ENCODE measurements at regions of chr7 and their contacts with region 1.

Region 1: DNA sequence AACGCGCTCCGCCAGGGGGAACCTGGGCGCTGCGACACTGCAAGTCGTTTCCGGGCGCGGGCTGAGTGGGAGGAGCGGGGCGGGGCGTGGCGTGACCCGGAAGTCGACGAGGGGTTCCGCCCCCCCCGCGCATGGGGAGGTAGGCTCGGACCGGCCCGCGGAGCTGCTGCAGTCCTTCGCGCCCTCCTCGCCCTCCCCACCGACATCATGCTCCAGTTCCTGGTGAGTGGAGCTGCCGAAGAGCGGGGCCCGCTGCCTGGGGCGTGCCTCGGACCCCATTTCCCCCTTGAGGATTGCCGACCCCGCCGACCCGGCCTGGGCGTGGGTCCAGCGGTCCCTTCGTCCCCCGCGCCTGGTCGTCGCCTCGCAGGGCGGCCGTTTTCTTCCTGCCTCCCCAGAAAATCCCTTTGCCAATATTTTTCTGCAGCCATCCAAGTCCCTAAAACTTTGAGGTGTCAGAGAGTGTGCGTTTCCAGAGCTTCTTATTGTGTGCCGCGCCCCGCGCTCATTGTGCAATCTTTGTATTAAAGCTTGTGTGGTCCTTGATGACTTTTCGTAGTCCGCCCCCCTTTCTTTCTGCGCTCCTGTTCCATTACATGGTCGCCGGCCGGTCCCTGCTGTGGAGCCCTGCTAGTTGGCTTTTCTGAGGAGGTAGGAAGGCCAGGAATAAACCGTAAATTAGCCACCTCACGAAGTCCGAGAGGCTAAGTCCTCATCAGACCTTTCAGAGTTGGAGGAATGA is at the start of gene STMP1:
- DNase-seq: peak; percentile 91 to 99 (median 96)
- ATAC-seq: peak; percentile 99
- H3K4me3 ChIP-seq: peak within 1 kb of the TSS; percentile 72 to 76
- H3K4me3 Mint-ChIP-seq: peak within 1 kb of the TSS; percentile 90
- H3K27ac ChIP-seq: peak within 1 kb of the TSS; percentile 53 to 65
- H3K27ac Mint-ChIP-seq: peak within 1 kb of the TSS; percentile 88
- H3K4me1 ChIP-seq: peaks cover 20% of the 10 kb centered on the region
- H3K4me1 Mint-ChIP-seq: peaks cover 41% of the 10 kb centered on the region
- H3K27me3 ChIP-seq: no peaks in the 10 kb centered on the region
- H3K27me3 Mint-ChIP-seq: no peaks in the 10 kb centered on the region
- CTCF ChIP-seq: peak; percentile 64
- total RNA-seq, gene STMP1: 9.4 to 11.5 TPM

Region 2: GRCh38 chr7:135558337-135558767 is 104.2 kb before region 1 on chr7:
- CTCF ChIA-PET with region 1: no interaction called
- POLR2A ChIA-PET with region 1: no interaction called
- intact Hi-C with region 1: loop called (anchors 1 to 2 kb)
- DNase-seq: peak; percentile 37 to 87 (median 68)
- ATAC-seq: peak; percentile 52
- H3K4me3 ChIP-seq: peak overlapping the region; percentile 85 to 86
- H3K4me3 Mint-ChIP-seq: no peak overlapping the region
- H3K27ac ChIP-seq: peak overlapping the region; percentile 90 to 98
- H3K27ac Mint-ChIP-seq: no peak overlapping the region
- H3K4me1 ChIP-seq: peaks cover 16% of the 10 kb centered on the region
- H3K4me1 Mint-ChIP-seq: peaks cover 17% of the 10 kb centered on the region
- H3K27me3 ChIP-seq: no peaks in the 10 kb centered on the region
- H3K27me3 Mint-ChIP-seq: no peaks in the 10 kb centered on the region
- CTCF ChIP-seq: peak; percentile 52

Region 3: DNA sequence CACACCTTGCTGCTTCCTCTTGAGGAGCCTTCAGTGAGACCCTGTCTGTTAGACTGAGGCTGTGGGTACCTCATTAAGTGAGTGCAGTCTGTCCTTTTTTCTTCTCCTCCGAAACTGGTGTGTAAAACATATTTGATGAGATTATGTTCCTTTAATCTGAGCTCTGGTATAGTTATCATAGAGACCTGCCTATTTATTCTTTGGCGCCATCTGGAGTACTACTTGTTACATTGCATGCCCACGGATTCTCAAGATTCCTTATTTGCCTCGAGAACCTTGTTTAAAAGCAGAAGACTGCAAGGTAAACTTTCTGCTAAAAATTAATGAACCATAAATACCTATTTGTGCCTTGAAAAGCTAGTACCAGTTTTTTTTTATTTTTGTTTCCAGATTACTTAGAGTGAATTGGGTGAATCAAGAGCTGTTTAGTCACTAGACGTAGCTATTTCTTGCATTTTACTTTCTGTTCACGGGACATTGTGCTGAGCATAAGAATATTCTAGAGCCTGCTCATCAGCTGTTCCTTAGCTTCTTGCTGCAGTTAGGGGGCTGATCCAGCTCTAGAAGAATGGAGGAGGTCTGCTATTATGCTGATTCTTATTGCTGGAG is 17.1 kb before region 1 on chr7:
- CTCF ChIA-PET with region 1: interaction called, 16 read pairs
- POLR2A ChIA-PET with region 1: interaction called, 3 read pairs
- intact Hi-C with region 1: no loop called
- DNase-seq: peak in 3 of 9 experiments; percentile 21 to 59 (median 52)
- ATAC-seq: peak; percentile 83
- H3K4me3 ChIP-seq: no peak overlapping the region
- H3K4me3 Mint-ChIP-seq: no peak overlapping the region
- H3K27ac ChIP-seq: no peak overlapping the region
- H3K27ac Mint-ChIP-seq: no peak overlapping the region
- H3K4me1 ChIP-seq: no peaks in the 10 kb centered on the region
- H3K4me1 Mint-ChIP-seq: no peaks in the 10 kb centered on the region
- H3K27me3 ChIP-seq: no peaks in the 10 kb centered on the region
- H3K27me3 Mint-ChIP-seq: no peaks in the 10 kb centered on the region
- CTCF ChIP-seq: peak; percentile 79

Region 4: DNA sequence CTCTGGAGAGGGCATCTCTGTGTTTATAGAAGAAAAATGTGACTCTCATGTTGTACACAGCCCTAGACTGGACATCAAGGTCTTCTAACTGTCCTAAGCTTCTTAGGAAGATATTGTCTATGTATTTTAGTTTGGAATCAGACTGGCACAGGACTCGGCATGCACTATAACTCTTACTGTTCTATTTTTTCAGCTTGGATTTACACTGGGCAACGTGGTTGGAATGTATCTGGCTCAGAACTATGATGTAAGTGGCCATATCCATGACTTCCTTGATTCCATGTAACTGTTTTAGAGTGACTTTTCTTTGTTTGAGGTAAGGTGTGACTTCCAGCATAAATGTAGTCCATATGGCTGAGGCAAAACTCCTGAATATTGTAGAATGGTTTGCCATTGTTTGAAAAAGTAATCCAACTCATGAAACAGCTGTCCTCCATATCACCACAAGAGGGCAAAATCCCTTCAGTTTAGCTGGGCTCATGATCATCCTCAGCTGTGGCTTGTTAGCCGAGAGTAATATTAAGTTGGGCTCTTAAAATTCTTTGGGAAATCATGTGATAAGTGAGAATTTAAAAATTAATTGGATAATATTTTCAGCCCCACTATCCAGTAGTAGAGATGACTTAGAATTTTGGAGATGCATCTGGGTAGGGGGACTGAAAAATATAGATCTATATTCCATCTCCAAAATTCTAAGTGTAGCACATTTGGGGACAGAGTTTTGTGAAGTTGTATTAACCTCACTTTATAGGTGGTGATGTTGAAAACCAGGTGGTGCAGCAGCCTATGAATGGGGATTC is 10.2 kb after region 1 on chr7:
- CTCF ChIA-PET with region 1: interaction called, 16 read pairs
- POLR2A ChIA-PET with region 1: interaction called, 8 read pairs
- intact Hi-C with region 1: no loop called
- DNase-seq: peak in 2 of 9 experiments; percentile 40 to 43
- ATAC-seq: peak; percentile 61
- H3K4me3 ChIP-seq: no peak overlapping the region
- H3K4me3 Mint-ChIP-seq: no peak overlapping the region
- H3K27ac ChIP-seq: no peak overlapping the region
- H3K27ac Mint-ChIP-seq: no peak overlapping the region
- H3K4me1 ChIP-seq: no peaks in the 10 kb centered on the region
- H3K4me1 Mint-ChIP-seq: peaks cover 28% of the 10 kb centered on the region
- H3K27me3 ChIP-seq: no peaks in the 10 kb centered on the region
- H3K27me3 Mint-ChIP-seq: no peaks in the 10 kb centered on the region
- CTCF ChIP-seq: peak; percentile 57

Region 5: DNA sequence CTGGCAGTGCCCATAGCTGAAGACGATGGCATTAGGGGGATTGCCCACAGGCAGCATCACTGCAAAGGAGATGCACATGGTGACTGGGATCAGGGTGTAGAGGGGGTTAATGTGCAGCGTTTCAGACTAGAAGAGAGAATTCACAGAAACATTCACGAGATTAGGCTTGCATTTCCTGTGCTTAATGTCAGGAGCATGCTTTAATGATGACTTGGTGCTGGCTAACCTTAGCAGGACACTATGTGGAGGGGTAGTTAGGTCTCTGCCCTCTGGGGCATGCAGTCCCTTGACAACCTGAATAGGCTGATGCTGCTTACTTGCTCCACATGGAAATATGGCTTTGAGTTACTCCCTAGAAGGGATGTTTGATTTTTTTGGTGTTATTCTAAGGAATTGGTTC is 21.6 kb after region 1 on chr7:
- CTCF ChIA-PET with region 1: no interaction called
- POLR2A ChIA-PET with region 1: no interaction called
- intact Hi-C with region 1: no loop called
- DNase-seq: no peak
- ATAC-seq: no peak
- H3K4me3 ChIP-seq: no peak overlapping the region
- H3K4me3 Mint-ChIP-seq: no peak overlapping the region
- H3K27ac ChIP-seq: no peak overlapping the region
- H3K27ac Mint-ChIP-seq: no peak overlapping the region
- H3K4me1 ChIP-seq: no peaks in the 10 kb centered on the region
- H3K4me1 Mint-ChIP-seq: peaks cover 2% of the 10 kb centered on the region
- H3K27me3 ChIP-seq: no peaks in the 10 kb centered on the region
- H3K27me3 Mint-ChIP-seq: no peaks in the 10 kb centered on the region
- CTCF ChIP-seq: no peak

Region 6: DNA sequence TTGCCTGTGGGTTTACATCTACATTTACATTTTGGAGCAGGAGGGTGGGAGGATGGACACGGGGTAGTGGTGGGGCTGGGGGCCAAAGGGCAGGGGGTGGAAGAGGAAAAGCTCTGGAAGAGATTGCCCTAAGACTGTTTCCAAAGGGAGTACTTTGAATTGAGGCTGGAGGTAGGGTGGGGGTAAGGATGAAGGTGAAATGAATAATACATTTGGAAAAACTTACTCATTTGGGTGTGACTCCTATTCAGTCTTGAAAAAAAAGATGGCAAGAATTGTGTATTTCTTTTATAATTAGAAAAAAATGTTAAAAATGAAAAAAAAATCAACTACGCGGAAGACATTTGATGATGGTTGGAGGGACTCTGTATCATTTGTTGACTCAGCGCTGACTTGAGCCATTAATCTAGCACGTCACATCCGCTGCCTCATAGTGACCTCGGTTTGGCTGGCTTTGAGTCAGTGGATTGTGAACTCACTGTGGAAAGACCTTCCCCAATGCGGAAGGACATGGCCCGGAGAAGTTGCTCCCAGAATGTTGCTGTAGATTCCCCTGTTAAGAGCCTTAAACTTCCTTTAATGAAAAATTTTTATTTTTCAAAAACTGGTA is 83.3 kb after region 1 on chr7:
- CTCF ChIA-PET with region 1: no interaction called
- POLR2A ChIA-PET with region 1: no interaction called
- intact Hi-C with region 1: no loop called
- DNase-seq: no peak
- ATAC-seq: no peak
- H3K4me3 ChIP-seq: no peak overlapping the region
- H3K4me3 Mint-ChIP-seq: no peak overlapping the region
- H3K27ac ChIP-seq: no peak overlapping the region
- H3K27ac Mint-ChIP-seq: no peak overlapping the region
- H3K4me1 ChIP-seq: no peaks in the 10 kb centered on the region
- H3K4me1 Mint-ChIP-seq: no peaks in the 10 kb centered on the region
- H3K27me3 ChIP-seq: no peaks in the 10 kb centered on the region
- H3K27me3 Mint-ChIP-seq: peaks cover 4% of the 10 kb centered on the region
- CTCF ChIP-seq: no peak

Region 7: GRCh38 chr7:135977007-135977741 is 314.6 kb after region 1 on chr7 and contains the start of gene MTPN:
- CTCF ChIA-PET with region 1: no interaction called
- POLR2A ChIA-PET with region 1: no interaction called
- intact Hi-C with region 1: loop called (anchors 1 kb)
- DNase-seq: peak; percentile 94 to 98 (median 98)
- ATAC-seq: peak; percentile 81
- H3K4me3 ChIP-seq: peak within 1 kb of the TSS; percentile 89 to 93
- H3K4me3 Mint-ChIP-seq: peak within 1 kb of the TSS; percentile 92
- H3K27ac ChIP-seq: peak within 1 kb of the TSS; percentile 82 to 88
- H3K27ac Mint-ChIP-seq: peak within 1 kb of the TSS; percentile 93
- H3K4me1 ChIP-seq: peaks cover 71% of the 10 kb centered on the region
- H3K4me1 Mint-ChIP-seq: peaks cover 79% of the 10 kb centered on the region
- H3K27me3 ChIP-seq: no peaks in the 10 kb centered on the region
- H3K27me3 Mint-ChIP-seq: no peaks in the 10 kb centered on the region
- CTCF ChIP-seq: no peak
- total RNA-seq, gene MTPN: 91.9 to 101 TPM

Measured in CD8-positive, alpha-beta T cell (primary cell).